CD8-positive, alpha-beta memory T cell (primary cell): ENCODE measurements at regions of chr5 and their contacts with region 1.

Region 1: GRCh38 chr5:59039296-59040023 is 456.6 kb downstream of the RAB3C start:
- DNase-seq: peak; percentile 80 to 95 (median 92)
- H3K4me3 ChIP-seq: peak overlapping the region; percentile 76
- H3K4me3 Mint-ChIP-seq: peak overlapping the region; percentile 86 to 98 (median 92)
- H3K27ac ChIP-seq: peak overlapping the region; percentile 62
- H3K27ac Mint-ChIP-seq: peak overlapping the region; percentile 91 to 99 (median 98)
- H3K4me1 ChIP-seq: peaks cover 46% of the 10 kb centered on the region
- H3K4me1 Mint-ChIP-seq: peaks cover 47 to 70% (median 56%) of the 10 kb centered on the region in 3 donors
- H3K27me3 ChIP-seq: no peaks in the 10 kb centered on the region
- H3K27me3 Mint-ChIP-seq: peaks cover 0 to 1% of the 10 kb centered on the region in 2 donors

Region 2: DNA sequence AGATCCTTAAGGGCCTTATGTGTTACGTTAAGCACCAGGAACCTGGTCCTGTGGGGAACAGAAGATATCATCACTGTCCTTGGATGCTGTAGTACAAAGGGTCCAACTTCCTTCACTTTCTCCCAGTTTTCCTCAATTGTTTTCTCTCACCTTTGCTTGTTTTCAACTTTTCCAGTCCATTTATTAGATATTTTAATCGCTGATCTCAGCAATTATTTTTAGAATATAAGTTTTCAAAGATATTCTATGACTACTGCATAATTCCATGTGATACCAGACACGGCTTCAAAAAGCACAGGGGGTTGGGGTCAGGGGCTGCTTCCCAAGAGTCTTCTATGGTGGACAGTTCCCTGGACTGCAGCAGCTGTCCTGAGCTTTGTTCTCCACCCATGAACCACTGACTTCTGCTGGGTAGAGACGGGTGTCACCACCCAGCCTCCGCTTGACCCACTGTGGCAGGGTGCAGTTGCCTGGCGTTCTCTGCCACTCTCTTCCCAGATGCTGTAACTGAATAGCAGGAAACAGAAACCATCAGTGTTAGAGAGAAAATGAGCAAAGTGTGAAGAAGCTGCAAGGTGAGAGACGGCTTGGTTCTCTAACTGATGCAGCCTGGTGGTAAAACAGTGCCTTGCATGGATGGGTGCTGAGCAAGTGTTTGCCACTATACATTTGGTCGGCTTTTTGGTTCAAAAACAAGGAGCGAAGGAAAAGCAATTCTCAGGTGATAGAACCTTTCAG is 73.6 kb before region 1 on chr5:
- CTCF ChIA-PET with region 1: no interaction called
- POLR2A ChIA-PET with region 1: no interaction called
- DNase-seq: no peak
- H3K4me3 ChIP-seq: no peak overlapping the region
- H3K4me3 Mint-ChIP-seq: no peak overlapping the region
- H3K27ac ChIP-seq: no peak overlapping the region
- H3K27ac Mint-ChIP-seq: no peak overlapping the region
- H3K4me1 ChIP-seq: no peaks in the 10 kb centered on the region
- H3K4me1 Mint-ChIP-seq: peaks cover 0 to 7% (median 0%) of the 10 kb centered on the region in 3 donors
- H3K27me3 ChIP-seq: no peaks in the 10 kb centered on the region
- H3K27me3 Mint-ChIP-seq: no peaks in the 10 kb centered on the region

Region 3: DNA sequence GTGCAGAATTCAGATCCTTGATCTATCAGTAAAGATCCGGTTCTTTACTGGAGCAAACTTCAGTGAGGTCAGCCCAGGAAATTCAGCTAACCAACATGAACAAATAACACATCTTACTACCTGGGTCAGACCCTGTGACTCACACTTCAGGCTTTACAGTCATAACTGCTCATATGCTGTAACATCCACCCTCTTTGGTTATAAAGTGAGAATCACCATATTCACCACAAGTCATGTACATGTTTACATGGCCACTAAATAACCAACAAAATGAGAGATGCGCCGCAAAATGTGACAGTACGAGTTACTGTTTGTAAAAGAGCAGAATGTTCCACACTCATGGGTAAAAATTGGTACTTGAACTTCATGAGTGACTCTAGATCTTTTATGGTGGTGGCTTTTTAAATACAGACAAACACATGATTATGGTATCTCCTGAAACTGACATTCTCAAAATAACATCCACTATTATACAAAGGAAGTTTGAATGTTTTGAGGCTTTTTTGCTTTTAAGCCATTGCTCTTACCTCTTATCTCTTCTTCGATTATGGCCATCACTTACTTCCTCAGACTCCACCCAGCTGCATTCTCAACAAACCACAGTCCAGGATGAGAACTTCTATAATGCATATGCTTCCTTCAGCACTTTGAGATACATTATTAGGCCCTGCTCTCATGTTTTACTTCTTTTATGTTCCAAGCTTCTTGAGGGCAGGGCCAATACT is 60.0 kb after region 1 on chr5:
- CTCF ChIA-PET with region 1: interaction called, 5 read pairs
- POLR2A ChIA-PET with region 1: interaction called, 12 read pairs
- DNase-seq: peak; percentile 16 to 81 (median 25)
- H3K4me3 ChIP-seq: no peak overlapping the region
- H3K4me3 Mint-ChIP-seq: peak overlapping the region in 6 of 7 donors; percentile 1 to 64 (median 46)
- H3K27ac ChIP-seq: no peak overlapping the region
- H3K27ac Mint-ChIP-seq: peak overlapping the region; percentile 63 to 95 (median 86)
- H3K4me1 ChIP-seq: peaks cover 17% of the 10 kb centered on the region
- H3K4me1 Mint-ChIP-seq: peaks cover 27 to 48% (median 37%) of the 10 kb centered on the region in 3 donors
- H3K27me3 ChIP-seq: no peaks in the 10 kb centered on the region
- H3K27me3 Mint-ChIP-seq: peaks cover 0 to 3% of the 10 kb centered on the region in 2 donors

Region 4: GRCh38 chr5:59126708-59127573 is 87.5 kb after region 1 on chr5:
- CTCF ChIA-PET with region 1: interaction called, 25 read pairs
- POLR2A ChIA-PET with region 1: interaction called, 47 read pairs
- DNase-seq: no peak
- H3K4me3 ChIP-seq: peak overlapping the region; percentile 49
- H3K4me3 Mint-ChIP-seq: no peak overlapping the region
- H3K27ac ChIP-seq: peak overlapping the region; percentile 49
- H3K27ac Mint-ChIP-seq: no peak overlapping the region
- H3K4me1 ChIP-seq: peaks cover 65% of the 10 kb centered on the region
- H3K4me1 Mint-ChIP-seq: peaks cover 6 to 13% (median 12%) of the 10 kb centered on the region in 3 donors
- H3K27me3 ChIP-seq: no peaks in the 10 kb centered on the region
- H3K27me3 Mint-ChIP-seq: no peaks in the 10 kb centered on the region

Region 5: DNA sequence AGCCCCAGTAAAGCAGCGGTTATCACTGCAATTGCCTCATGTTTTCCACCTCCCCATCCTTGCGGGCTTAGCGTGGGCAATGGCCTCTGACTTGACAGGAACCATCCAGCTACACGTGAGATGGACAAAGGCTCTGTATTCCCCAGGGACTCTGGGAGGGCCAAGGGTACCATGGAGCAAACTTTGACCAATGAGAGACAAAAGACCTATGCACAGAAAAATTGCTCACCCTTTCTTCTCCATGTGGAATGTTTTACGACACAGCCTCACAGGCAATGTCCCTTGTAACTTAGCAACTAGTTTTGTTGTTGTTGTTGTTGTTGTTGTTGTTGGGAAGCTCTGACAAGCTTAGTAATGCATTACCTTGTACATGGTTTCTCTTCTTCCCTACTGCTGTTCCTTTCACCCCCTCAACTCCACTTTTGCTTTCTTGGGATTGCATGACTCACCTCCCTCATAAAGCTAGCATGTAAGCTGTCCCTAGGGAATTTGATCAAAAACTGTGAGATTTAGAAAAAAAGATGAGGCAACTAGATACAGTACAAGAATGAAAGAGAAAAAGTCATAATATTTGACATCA is 94.3 kb after region 1 on chr5:
- CTCF ChIA-PET with region 1: interaction called, 25 read pairs
- POLR2A ChIA-PET with region 1: interaction called, 47 read pairs
- DNase-seq: no peak
- H3K4me3 ChIP-seq: no peak overlapping the region
- H3K4me3 Mint-ChIP-seq: no peak overlapping the region
- H3K27ac ChIP-seq: no peak overlapping the region
- H3K27ac Mint-ChIP-seq: peak overlapping the region in 5 of 8 donors; percentile 5 to 89 (median 78)
- H3K4me1 ChIP-seq: peaks cover 9% of the 10 kb centered on the region
- H3K4me1 Mint-ChIP-seq: peaks cover 16 to 44% (median 36%) of the 10 kb centered on the region in 3 donors
- H3K27me3 ChIP-seq: no peaks in the 10 kb centered on the region
- H3K27me3 Mint-ChIP-seq: peaks cover 4% of the 10 kb centered on the region in 2 donors

Region 6: DNA sequence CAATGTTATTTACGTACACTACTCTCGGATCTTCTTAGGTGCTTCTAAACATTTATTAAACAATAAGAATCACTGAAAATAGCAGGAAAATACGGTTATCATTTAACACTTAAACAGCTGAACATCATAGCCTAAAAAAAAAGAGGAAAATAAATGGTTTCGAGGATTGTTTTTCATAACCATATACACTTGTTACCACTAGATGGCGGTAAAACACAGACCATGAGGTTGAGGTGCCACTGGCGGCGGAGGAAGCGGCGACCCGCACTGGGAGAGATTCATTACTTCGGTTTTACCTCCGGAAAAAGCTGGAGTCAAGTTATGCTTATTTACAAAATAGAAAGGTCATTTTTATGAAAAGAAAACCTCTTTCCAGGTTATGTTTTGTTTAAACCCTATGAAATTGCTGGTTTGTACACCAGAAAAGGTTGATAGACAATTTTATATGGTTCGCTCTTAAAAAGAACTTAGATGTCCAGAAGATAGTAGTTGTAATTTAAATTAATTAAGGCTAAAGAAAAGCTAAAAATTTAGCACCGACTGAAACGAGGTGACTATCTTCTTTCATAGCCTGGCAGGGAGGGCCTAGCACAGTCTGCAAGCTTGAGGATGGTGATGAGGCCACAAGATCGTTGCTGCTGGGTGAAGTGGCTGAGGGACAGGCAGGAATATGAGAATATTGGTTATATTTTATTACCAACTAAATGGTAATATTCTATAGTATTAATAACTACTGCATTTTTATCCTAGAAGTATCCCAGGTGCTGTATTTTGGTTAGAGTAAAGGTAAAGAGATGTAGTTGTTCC is 149.2 kb after region 1 on chr5:
- CTCF ChIA-PET with region 1: interaction called, 19 read pairs
- POLR2A ChIA-PET with region 1: interaction called, 3 read pairs
- DNase-seq: peak; percentile 31 to 75 (median 58)
- H3K4me3 ChIP-seq: no peak overlapping the region
- H3K4me3 Mint-ChIP-seq: peak overlapping the region in 1 of 7 donors; percentile 9
- H3K27ac ChIP-seq: no peak overlapping the region
- H3K27ac Mint-ChIP-seq: no peak overlapping the region
- H3K4me1 ChIP-seq: no peaks in the 10 kb centered on the region
- H3K4me1 Mint-ChIP-seq: peaks cover 3 to 6% (median 5%) of the 10 kb centered on the region in 3 donors
- H3K27me3 ChIP-seq: no peaks in the 10 kb centered on the region
- H3K27me3 Mint-ChIP-seq: peaks cover 4 to 22% of the 10 kb centered on the region in 2 donors